Activated CD8-positive, alpha-beta memory T cell treated with anti-CD3 and anti-CD28 coated beads, Interleukin-2, amount 10 ng/mL, durations not matched to agents 7 days and 5 days (primary cell): ENCODE measurements at regions of chr12 and their contacts with region 1.

Region 1: DNA sequence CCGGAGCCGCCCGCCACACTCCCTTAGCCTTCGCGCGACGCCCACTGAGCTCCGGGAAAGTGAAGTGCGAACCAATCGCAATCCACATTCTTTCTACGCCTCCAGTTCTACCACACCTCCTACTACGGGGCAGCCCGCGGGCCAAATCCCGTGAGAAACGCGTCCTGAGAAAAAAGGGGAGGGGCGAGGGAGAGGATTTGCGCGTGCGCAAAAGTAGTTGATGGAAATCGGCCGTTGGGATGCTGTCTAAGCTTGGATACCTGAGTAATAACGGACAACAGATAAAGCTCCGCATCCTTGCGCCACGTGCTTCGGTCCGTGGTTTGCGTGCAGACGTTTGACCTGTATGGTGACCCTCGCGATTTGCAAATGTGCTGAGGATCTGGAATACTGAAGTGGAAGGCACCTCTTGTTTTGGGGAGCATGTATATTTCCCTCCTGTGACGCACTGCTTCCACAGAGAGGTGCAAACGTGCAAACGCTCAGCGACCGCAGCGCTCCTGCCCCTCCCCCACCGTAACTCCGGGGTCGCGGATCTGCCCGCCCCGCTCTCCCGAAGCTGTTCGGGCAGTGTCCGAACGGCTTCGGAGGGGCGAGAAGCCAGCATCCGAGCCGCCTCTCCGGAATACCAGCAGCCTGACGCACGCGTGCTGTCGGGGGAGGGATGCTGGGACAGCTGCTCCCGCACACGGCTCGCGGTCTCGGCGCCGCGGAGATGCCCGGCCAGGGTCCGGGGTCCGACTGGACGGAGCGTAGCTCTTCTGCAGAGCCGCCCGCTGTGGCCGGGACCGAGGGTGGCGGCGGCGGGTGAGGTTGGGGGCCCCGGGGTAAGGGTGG is at the starts of genes FAM216A and GPN3:
- DNase-seq: peak; percentile 98
- ATAC-seq: peak; percentile 88
- H3K4me3 Mint-ChIP-seq: peak within 1 kb of the TSS; percentile 92
- H3K27ac Mint-ChIP-seq: peak within 1 kb of the TSS; percentile 98
- H3K4me1 Mint-ChIP-seq: peaks cover 43% of the 10 kb centered on the region
- H3K27me3 Mint-ChIP-seq: no peaks in the 10 kb centered on the region
- total RNA-seq, gene FAM216A: 23.1 to 24.8 TPM
- total RNA-seq, gene GPN3: 25.8 to 34.6 TPM

Region 2: DNA sequence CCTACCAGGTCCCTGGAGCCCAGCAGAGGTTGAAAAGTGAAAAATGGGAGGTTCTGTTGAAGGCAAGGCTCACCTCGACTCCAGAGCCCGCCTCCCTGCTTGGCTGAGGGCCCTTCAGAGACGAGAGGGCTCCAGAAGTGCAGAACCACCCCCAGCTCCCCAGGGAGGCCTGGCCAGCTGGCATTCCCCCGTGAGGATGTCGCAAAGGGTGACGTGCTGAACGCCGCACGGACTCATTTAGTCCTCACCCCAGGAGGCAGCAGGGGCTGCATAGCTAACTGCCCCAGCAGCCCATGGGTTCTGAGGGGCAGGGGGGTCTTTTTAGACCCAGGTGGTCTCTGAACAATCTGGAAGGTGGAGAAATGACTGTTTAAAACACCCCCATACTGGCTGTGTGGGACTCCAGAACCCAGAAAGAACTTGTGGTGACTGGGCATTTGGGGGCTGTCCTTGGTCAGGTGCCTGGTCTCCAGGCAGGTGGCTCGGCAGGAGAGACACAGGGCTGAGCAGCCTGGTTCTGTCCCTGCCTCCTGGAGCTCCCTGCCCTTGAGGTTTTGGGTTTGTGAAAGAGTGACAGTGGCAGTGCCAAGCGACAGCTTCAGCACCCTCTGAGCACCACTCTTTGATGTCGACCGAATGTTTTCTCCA is 96.9 kb before region 1 on chr12:
- CTCF ChIA-PET with region 1: no interaction called
- DNase-seq: no peak
- ATAC-seq: no peak
- H3K4me3 Mint-ChIP-seq: no peak overlapping the region
- H3K27ac Mint-ChIP-seq: no peak overlapping the region
- H3K4me1 Mint-ChIP-seq: no peaks in the 10 kb centered on the region
- H3K27me3 Mint-ChIP-seq: no peaks in the 10 kb centered on the region

Region 3: DNA sequence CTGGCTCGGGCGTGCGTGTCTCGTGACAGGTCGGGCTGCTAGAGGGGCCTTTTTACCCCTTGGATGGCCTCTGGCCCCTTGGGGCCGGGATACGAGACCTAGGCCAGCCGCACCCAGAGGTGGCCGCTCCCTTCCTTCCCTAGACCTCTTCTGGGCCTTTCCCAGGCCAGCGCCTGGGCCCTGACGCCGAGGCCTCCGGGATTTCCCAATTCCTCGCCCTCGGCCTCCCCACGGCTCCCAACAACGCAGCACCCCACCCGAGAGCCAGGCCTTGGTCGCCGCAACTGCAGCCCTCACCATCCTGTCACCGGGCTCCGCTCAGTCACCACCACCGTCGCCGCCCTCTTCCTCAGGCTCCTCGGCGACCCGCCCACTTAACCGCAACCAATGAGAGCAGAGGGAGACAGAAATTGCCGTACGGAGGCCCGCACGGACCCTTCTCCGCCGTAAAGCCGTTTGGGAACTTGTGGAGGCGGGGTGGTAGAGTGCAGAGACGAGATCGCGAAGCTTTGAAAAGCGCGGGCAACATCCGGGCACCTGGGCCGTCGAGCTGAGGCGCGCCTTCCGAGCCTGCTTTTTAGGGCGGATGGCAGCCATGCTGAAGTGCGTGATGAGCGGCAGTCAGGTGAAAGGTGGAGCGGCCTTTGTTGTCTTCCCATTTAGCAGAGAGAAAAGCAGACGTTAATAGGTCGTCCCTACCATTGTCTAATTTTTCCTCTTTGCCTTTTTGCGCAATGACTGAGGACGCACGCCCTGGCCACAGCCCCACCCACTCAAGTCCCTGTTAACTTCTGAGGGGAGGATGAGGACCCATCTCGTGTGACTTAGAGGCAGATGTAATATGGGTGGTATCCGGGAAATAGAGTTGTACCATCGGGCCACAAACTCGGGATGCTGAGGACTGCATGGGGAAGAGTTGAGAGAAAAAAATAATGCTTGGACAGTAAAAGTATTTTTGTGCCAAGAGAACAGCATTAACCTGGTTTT is 33.6 kb after region 1 on chr12 and contains the starts of genes RAD9B and VPS29:
- CTCF ChIA-PET with region 1: interaction called, 48 read pairs
- DNase-seq: peak; percentile 100
- ATAC-seq: peak; percentile 95
- H3K4me3 Mint-ChIP-seq: peak within 1 kb of the TSS; percentile 99
- H3K27ac Mint-ChIP-seq: peak within 1 kb of the TSS; percentile 98
- H3K4me1 Mint-ChIP-seq: peaks cover 35% of the 10 kb centered on the region
- H3K27me3 Mint-ChIP-seq: no peaks in the 10 kb centered on the region
- total RNA-seq, gene RAD9B: 1.8 to 2.2 TPM
- total RNA-seq, gene VPS29: 126 to 132 TPM

Region 4: DNA sequence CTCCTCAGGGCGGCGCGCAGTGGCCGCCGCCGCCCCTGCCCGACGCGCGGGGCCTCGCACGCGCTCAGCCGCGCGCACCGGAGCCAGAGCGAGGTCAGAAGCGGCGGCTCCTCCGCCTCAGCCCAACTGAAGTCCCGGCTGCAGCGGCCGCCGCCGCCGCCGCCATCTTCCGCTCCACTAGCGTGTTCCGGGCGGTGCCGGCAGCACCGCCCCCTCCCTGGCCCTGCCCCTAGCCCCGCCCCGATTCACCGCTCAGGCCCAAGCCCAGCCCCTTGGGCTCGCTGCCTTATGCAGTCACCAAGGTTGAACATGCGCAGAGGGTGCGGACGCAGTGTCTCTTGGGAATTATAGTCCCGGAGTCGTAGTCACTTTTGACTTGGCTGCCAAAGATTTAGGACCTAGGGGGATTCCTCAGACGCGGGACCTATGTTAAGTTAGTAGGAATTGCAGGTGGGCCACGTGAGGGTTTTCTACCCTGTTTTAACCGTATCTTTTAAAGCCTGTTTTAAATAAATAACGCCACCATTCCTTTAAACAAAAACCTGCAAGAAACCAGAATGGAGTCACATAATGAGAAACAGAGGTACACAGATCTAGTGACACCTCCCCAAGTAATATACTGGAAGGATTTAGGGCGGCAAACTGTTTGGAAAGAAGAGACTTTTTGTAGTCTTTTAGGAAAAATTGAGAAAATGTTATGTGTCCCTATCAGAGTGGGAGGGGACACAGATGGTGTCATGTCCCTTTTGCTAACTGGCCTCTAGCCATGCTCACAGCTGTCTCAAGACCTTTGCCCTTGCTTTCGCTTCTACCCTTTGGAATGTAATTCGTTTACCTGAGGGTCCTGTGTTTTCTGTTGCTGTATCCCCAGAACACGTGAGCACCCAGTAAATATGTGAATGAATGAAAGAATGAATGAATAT is 115.0 kb after region 1 on chr12 and contains the start of gene PPTC7:
- CTCF ChIA-PET with region 1: interaction called, 12 read pairs
- DNase-seq: peak; percentile 98
- ATAC-seq: peak; percentile 95
- H3K4me3 Mint-ChIP-seq: peak within 1 kb of the TSS; percentile 92
- H3K27ac Mint-ChIP-seq: peak within 1 kb of the TSS; percentile 89
- H3K4me1 Mint-ChIP-seq: peaks cover 59% of the 10 kb centered on the region
- H3K27me3 Mint-ChIP-seq: no peaks in the 10 kb centered on the region
- total RNA-seq, gene PPTC7: 23.2 to 32.9 TPM